Endothelial cell of umbilical vein (primary cell): ENCODE measurements at regions of chr22 and their contacts with region 1.

Region 1: GRCh38 chr22:41403532-41404318 is 22.0 kb downstream of the TEF start:
- DNase-seq: peak; percentile 80
- H3K4me3 ChIP-seq: no peak overlapping the region
- H3K27ac ChIP-seq: no peak overlapping the region
- H3K4me1 ChIP-seq: no peaks in the 10 kb centered on the region
- H3K27me3 ChIP-seq: no peaks in the 10 kb centered on the region
- CTCF ChIP-seq: peak; percentile 94 to 97
- POLR2A ChIP-seq: no peak

Region 2: GRCh38 chr22:41448189-41448808 is 44.6 kb after region 1 on chr22:
- CTCF ChIA-PET with region 1: interaction called, 20 read pairs
- POLR2A ChIA-PET with region 1: interaction called, 3 read pairs
- dilution Hi-C with region 1: no loop called
- intact Hi-C with region 1: no loop called
- DNase-seq: peak; percentile 100
- H3K4me3 ChIP-seq: peak overlapping the region; percentile 83 to 96 (median 95)
- H3K27ac ChIP-seq: peak overlapping the region; percentile 83
- H3K4me1 ChIP-seq: peaks cover 4% of the 10 kb centered on the region
- H3K27me3 ChIP-seq: no peaks in the 10 kb centered on the region
- CTCF ChIP-seq: no peak
- POLR2A ChIP-seq: peak; percentile 19

Region 3: GRCh38 chr22:41501209-41501608 is 97.5 kb after region 1 on chr22:
- CTCF ChIA-PET with region 1: interaction called, 38 read pairs
- POLR2A ChIA-PET with region 1: no interaction called
- dilution Hi-C with region 1: no loop called
- intact Hi-C with region 1: no loop called
- DNase-seq: peak; percentile 16
- H3K4me3 ChIP-seq: no peak overlapping the region
- H3K27ac ChIP-seq: no peak overlapping the region
- H3K4me1 ChIP-seq: no peaks in the 10 kb centered on the region
- H3K27me3 ChIP-seq: no peaks in the 10 kb centered on the region
- CTCF ChIP-seq: peak in 1 of 2 donors; percentile 25
- POLR2A ChIP-seq: no peak

Region 4: GRCh38 chr22:41526837-41527799 is 123.4 kb after region 1 on chr22:
- CTCF ChIA-PET with region 1: interaction called, 124 read pairs
- POLR2A ChIA-PET with region 1: interaction called, 5 read pairs
- dilution Hi-C with region 1: no loop called
- intact Hi-C with region 1: no loop called
- DNase-seq: no peak
- H3K4me3 ChIP-seq: no peak overlapping the region
- H3K27ac ChIP-seq: no peak overlapping the region
- H3K4me1 ChIP-seq: no peaks in the 10 kb centered on the region
- H3K27me3 ChIP-seq: no peaks in the 10 kb centered on the region
- CTCF ChIP-seq: peak; percentile 87 to 92
- POLR2A ChIP-seq: peak; percentile 13

Region 5: GRCh38 chr22:41582694-41583093 is 179.0 kb after region 1 on chr22:
- CTCF ChIA-PET with region 1: no interaction called
- POLR2A ChIA-PET with region 1: no interaction called
- dilution Hi-C with region 1: no loop called
- intact Hi-C with region 1: no loop called
- DNase-seq: no peak
- H3K4me3 ChIP-seq: no peak overlapping the region
- H3K27ac ChIP-seq: no peak overlapping the region
- H3K4me1 ChIP-seq: no peaks in the 10 kb centered on the region
- H3K27me3 ChIP-seq: no peaks in the 10 kb centered on the region
- CTCF ChIP-seq: no peak
- POLR2A ChIP-seq: no peak

Region 6: DNA sequence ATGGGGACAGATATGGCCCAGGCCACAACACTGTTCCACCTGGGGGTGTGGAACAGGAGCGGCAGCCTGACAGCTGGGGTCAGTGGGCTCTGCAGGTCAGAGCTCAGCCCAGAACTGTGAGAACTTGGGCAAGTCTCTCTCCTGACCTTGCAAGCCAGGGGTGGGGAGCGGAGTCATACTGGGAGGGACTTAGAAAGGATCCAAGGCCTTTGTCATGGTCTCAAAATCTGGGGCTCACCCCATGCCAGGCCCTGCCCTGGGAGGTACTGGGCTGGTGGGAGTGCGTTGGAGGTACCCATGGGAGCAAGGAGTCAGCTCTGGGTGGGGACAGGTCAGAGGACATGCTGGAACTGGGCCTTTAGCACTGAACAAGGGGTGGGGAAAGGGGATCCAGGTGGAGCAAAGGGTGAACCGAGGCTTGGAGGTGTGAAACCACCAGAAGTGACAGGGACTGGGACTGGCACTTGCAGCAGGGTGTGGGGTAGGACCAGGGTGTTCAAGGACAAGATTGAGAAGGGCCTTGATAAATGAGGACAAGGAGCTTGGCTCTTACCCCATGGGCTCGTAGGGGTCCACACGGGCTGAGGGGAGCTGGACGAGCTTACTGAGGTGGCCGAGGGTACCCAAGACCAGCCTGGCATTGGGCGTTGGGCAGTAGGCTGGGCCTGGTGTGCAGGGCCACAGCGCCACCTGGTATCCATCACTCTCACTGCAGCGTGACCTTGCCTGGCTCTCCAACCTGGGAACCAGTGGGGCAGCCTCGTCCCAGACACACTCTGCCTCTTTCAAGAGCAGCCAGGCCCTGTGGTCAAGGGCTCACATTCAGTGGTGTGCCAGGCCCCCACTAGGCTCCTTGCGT is 193.3 kb after region 1 on chr22:
- CTCF ChIA-PET with region 1: interaction called, 7 read pairs
- POLR2A ChIA-PET with region 1: no interaction called
- dilution Hi-C with region 1: no loop called
- intact Hi-C with region 1: loop called (anchors 1 kb)
- DNase-seq: peak; percentile 48
- H3K4me3 ChIP-seq: no peak overlapping the region
- H3K27ac ChIP-seq: no peak overlapping the region
- H3K4me1 ChIP-seq: peaks cover 15% of the 10 kb centered on the region
- H3K27me3 ChIP-seq: no peaks in the 10 kb centered on the region
- CTCF ChIP-seq: peak; percentile 73 to 88
- POLR2A ChIP-seq: no peak